CD8-positive, alpha-beta T cell (primary cell): ENCODE measurements at regions of chr4 and their contacts with region 1.

Region 1: GRCh38 chr4:38529189-38530115 is 134.5 kb upstream of the KLF3 start:
- DNase-seq: peak in 8 of 9 experiments; percentile 9 to 81 (median 51)
- ATAC-seq: peak; percentile 92
- H3K4me3 ChIP-seq: no peak overlapping the region
- H3K4me3 Mint-ChIP-seq: peak overlapping the region; percentile 50
- H3K27ac ChIP-seq: peak overlapping the region in 1 of 2 experiments; percentile 80
- H3K27ac Mint-ChIP-seq: peak overlapping the region; percentile 91
- H3K4me1 ChIP-seq: peaks cover 18% of the 10 kb centered on the region
- H3K4me1 Mint-ChIP-seq: peaks cover 21% of the 10 kb centered on the region
- H3K27me3 ChIP-seq: no peaks in the 10 kb centered on the region
- H3K27me3 Mint-ChIP-seq: no peaks in the 10 kb centered on the region
- CTCF ChIP-seq: no peak

Region 2: DNA sequence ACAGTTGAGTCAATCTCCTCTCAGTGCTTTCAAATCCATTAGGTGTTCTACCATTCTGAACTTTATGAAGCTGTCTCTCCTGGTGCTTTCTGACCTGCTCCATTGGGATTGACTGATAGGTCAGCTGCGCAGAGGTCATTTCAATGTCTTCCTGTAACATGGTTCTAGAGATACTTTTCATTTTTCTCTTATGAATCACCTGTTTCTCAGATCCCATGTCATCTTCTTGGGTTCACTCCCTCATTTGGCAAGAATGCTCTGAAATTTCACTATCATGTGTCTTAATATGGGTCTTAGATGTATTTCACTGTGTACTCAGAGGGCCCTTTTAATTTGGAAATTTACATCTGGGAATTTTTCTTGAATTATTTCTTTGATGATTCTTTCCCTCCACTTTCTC is 716.7 kb before region 1 on chr4:
- CTCF ChIA-PET with region 1: no interaction called
- POLR2A ChIA-PET with region 1: no interaction called
- intact Hi-C with region 1: no loop called
- DNase-seq: no peak
- ATAC-seq: no peak
- H3K4me3 ChIP-seq: no peak overlapping the region
- H3K4me3 Mint-ChIP-seq: no peak overlapping the region
- H3K27ac ChIP-seq: no peak overlapping the region
- H3K27ac Mint-ChIP-seq: no peak overlapping the region
- H3K4me1 ChIP-seq: peaks cover 22% of the 10 kb centered on the region
- H3K4me1 Mint-ChIP-seq: peaks cover 21% of the 10 kb centered on the region
- H3K27me3 ChIP-seq: no peaks in the 10 kb centered on the region
- H3K27me3 Mint-ChIP-seq: no peaks in the 10 kb centered on the region
- CTCF ChIP-seq: no peak

Region 3: GRCh38 chr4:38539501-38539900 is 10.0 kb after region 1 on chr4:
- CTCF ChIA-PET with region 1: no interaction called
- POLR2A ChIA-PET with region 1: interaction called, 4 read pairs
- intact Hi-C with region 1: loop called in 1 of 2 experiments (anchors 2 kb)
- DNase-seq: no peak
- ATAC-seq: no peak
- H3K4me3 ChIP-seq: no peak overlapping the region
- H3K4me3 Mint-ChIP-seq: no peak overlapping the region
- H3K27ac ChIP-seq: no peak overlapping the region
- H3K27ac Mint-ChIP-seq: no peak overlapping the region
- H3K4me1 ChIP-seq: no peaks in the 10 kb centered on the region
- H3K4me1 Mint-ChIP-seq: no peaks in the 10 kb centered on the region
- H3K27me3 ChIP-seq: no peaks in the 10 kb centered on the region
- H3K27me3 Mint-ChIP-seq: no peaks in the 10 kb centered on the region
- CTCF ChIP-seq: no peak

Region 4: GRCh38 chr4:38647101-38647819 is 117.8 kb after region 1 on chr4:
- CTCF ChIA-PET with region 1: no interaction called
- POLR2A ChIA-PET with region 1: interaction called, 3 read pairs
- intact Hi-C with region 1: loop called in 1 of 2 experiments (anchors 5 kb)
- DNase-seq: no peak
- ATAC-seq: no peak
- H3K4me3 ChIP-seq: no peak overlapping the region
- H3K4me3 Mint-ChIP-seq: no peak overlapping the region
- H3K27ac ChIP-seq: no peak overlapping the region
- H3K27ac Mint-ChIP-seq: no peak overlapping the region
- H3K4me1 ChIP-seq: no peaks in the 10 kb centered on the region
- H3K4me1 Mint-ChIP-seq: peaks cover 18% of the 10 kb centered on the region
- H3K27me3 ChIP-seq: no peaks in the 10 kb centered on the region
- H3K27me3 Mint-ChIP-seq: no peaks in the 10 kb centered on the region
- CTCF ChIP-seq: no peak